CD4-positive, alpha-beta memory T cell (primary cell): ENCODE measurements at regions of chr21 and their contacts with region 1.

Region 1: DNA sequence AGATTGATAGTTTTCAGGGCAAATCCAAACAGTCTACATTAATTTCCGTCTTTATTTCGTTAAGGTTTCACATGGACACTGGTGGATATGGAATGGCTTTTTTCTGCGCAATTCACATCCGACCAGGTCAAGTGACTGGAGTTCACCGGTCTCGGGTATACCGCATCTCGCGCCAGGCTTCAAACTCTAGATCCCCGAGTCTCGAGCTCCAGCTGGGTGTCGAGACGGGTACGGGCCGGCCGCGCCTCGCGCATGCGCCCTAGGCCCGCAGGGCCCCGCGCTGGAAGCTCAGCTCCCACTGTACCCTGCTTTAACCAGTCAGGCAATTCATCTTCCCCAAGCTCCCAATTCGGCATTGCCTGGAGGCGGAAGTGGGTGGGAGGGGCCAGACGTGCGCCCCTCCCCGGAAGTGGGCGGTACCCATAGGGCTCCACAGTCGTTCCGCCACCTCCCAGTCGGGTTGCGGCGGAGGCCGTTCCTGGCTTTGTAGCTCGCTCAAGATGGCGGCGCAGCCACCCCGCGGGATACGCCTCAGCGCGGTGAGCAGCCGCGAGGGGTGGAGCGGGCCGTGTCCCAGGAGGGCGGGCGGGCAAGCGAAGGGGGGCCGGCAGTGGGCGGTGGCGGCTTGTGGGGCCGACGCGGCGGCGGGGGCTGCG is at the start of gene MORC3:
- DNase-seq: peak; percentile 96 to 98 (median 97)
- H3K4me3 ChIP-seq: peak within 1 kb of the TSS; percentile 75 to 98
- H3K4me3 Mint-ChIP-seq: peak within 1 kb of the TSS; percentile 94 to 98 (median 96)
- H3K27ac ChIP-seq: peak within 1 kb of the TSS; percentile 90
- H3K27ac Mint-ChIP-seq: peak within 1 kb of the TSS; percentile 89 to 99 (median 97)
- H3K4me1 ChIP-seq: peaks cover 28% of the 10 kb centered on the region
- H3K4me1 Mint-ChIP-seq: peaks cover 18 to 46% (median 34%) of the 10 kb centered on the region in 4 donors
- H3K27me3 ChIP-seq: no peaks in the 10 kb centered on the region
- H3K27me3 Mint-ChIP-seq: no peaks in the 10 kb centered on the region
- total RNA-seq, gene MORC3: 105 to 108 TPM

Region 2: GRCh38 chr21:36097266-36098230 is 222.3 kb before region 1 on chr21:
- CTCF ChIA-PET with region 1: no interaction called
- POLR2A ChIA-PET with region 1: no interaction called
- intact Hi-C with region 1: no loop called
- DNase-seq: no peak
- H3K4me3 ChIP-seq: no peak overlapping the region
- H3K4me3 Mint-ChIP-seq: no peak overlapping the region
- H3K27ac ChIP-seq: no peak overlapping the region
- H3K27ac Mint-ChIP-seq: no peak overlapping the region
- H3K4me1 ChIP-seq: no peaks in the 10 kb centered on the region
- H3K4me1 Mint-ChIP-seq: no peaks in the 10 kb centered on the region
- H3K27me3 ChIP-seq: no peaks in the 10 kb centered on the region
- H3K27me3 Mint-ChIP-seq: peaks cover 2 to 4% of the 10 kb centered on the region in 2 donors

Region 3: GRCh38 chr21:36135391-36136102 is 184.3 kb before region 1 on chr21:
- CTCF ChIA-PET with region 1: interaction called, 5 read pairs
- POLR2A ChIA-PET with region 1: interaction called, 14 read pairs
- intact Hi-C with region 1: no loop called
- DNase-seq: peak in 4 of 5 donors; percentile 49 to 61 (median 53)
- H3K4me3 ChIP-seq: peak overlapping the region; percentile 58 to 86
- H3K4me3 Mint-ChIP-seq: peak overlapping the region; percentile 89 to 96 (median 95)
- H3K27ac ChIP-seq: peak overlapping the region; percentile 51
- H3K27ac Mint-ChIP-seq: peak overlapping the region; percentile 86 to 95 (median 92)
- H3K4me1 ChIP-seq: peaks cover 25% of the 10 kb centered on the region
- H3K4me1 Mint-ChIP-seq: peaks cover 12 to 35% (median 21%) of the 10 kb centered on the region in 4 donors
- H3K27me3 ChIP-seq: no peaks in the 10 kb centered on the region
- H3K27me3 Mint-ChIP-seq: no peaks in the 10 kb centered on the region

Region 4: GRCh38 chr21:36149788-36150711 is 169.8 kb before region 1 on chr21:
- CTCF ChIA-PET with region 1: interaction called, 38 read pairs
- POLR2A ChIA-PET with region 1: interaction called, 28 read pairs
- intact Hi-C with region 1: no loop called
- DNase-seq: no peak
- H3K4me3 ChIP-seq: no peak overlapping the region
- H3K4me3 Mint-ChIP-seq: peak overlapping the region in 7 of 8 donors; percentile 54 to 77 (median 65)
- H3K27ac ChIP-seq: no peak overlapping the region
- H3K27ac Mint-ChIP-seq: peak overlapping the region; percentile 76 to 95 (median 91)
- H3K4me1 ChIP-seq: peaks cover 44% of the 10 kb centered on the region
- H3K4me1 Mint-ChIP-seq: peaks cover 29 to 63% (median 46%) of the 10 kb centered on the region in 4 donors
- H3K27me3 ChIP-seq: no peaks in the 10 kb centered on the region
- H3K27me3 Mint-ChIP-seq: no peaks in the 10 kb centered on the region

Region 5: GRCh38 chr21:36209626-36210171 is 110.2 kb before region 1 on chr21:
- CTCF ChIA-PET with region 1: no interaction called
- POLR2A ChIA-PET with region 1: interaction called, 10 read pairs
- intact Hi-C with region 1: no loop called
- DNase-seq: peak; percentile 46 to 53 (median 49)
- H3K4me3 ChIP-seq: no peak overlapping the region
- H3K4me3 Mint-ChIP-seq: no peak overlapping the region
- H3K27ac ChIP-seq: no peak overlapping the region
- H3K27ac Mint-ChIP-seq: peak overlapping the region in 3 of 7 donors; percentile 2 to 22 (median 10)
- H3K4me1 ChIP-seq: no peaks in the 10 kb centered on the region
- H3K4me1 Mint-ChIP-seq: peaks cover 3 to 8% (median 5%) of the 10 kb centered on the region in 4 donors
- H3K27me3 ChIP-seq: no peaks in the 10 kb centered on the region
- H3K27me3 Mint-ChIP-seq: no peaks in the 10 kb centered on the region

Region 6: GRCh38 chr21:36260030-36260787 is 59.7 kb before region 1 on chr21:
- CTCF ChIA-PET with region 1: interaction called, 29 read pairs
- POLR2A ChIA-PET with region 1: interaction called, 21 read pairs
- intact Hi-C with region 1: loop called (anchors 1 kb)
- DNase-seq: peak; percentile 58 to 72 (median 67)
- H3K4me3 ChIP-seq: peak overlapping the region; percentile 30 to 61
- H3K4me3 Mint-ChIP-seq: peak overlapping the region; percentile 76 to 87 (median 86)
- H3K27ac ChIP-seq: peak overlapping the region; percentile 44
- H3K27ac Mint-ChIP-seq: peak overlapping the region; percentile 57 to 95 (median 90)
- H3K4me1 ChIP-seq: peaks cover 12% of the 10 kb centered on the region
- H3K4me1 Mint-ChIP-seq: peaks cover 10 to 17% (median 15%) of the 10 kb centered on the region in 4 donors
- H3K27me3 ChIP-seq: no peaks in the 10 kb centered on the region
- H3K27me3 Mint-ChIP-seq: no peaks in the 10 kb centered on the region

Region 7: DNA sequence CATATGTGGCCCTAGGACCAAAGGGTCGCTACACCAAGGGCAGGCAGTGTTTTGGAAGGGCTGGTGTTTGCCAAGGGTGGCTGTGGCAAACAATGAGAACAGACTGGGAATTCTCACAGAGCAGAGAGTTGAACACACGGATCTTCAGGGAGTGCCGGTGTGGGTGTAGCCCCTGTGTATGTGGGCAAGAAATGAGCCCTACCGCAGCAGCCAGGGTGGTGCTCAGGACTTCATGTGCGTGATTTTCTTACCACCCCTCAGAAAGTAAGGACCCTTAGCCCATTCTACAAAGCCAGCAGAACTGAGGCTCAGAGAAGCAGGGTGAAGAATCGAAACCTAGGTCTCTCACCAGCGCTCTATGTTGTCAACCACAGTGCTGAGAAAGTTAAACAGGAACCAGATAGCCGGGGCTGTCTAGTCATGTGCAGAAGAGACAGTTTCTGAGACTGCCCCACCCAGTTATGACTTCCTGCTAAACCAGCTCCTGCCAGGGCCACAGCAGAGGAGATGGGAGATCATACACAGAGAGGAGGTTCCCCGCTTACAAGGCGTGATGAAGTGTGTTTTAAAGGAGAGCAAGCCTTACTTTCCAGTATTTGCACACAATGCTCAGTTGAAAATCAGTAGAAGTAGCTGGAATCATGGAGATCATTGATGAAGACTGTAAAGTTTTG is 21.8 kb before region 1 on chr21:
- CTCF ChIA-PET with region 1: interaction called, 20 read pairs
- POLR2A ChIA-PET with region 1: interaction called, 279 read pairs
- intact Hi-C with region 1: loop called (anchors 1 kb)
- DNase-seq: peak; percentile 81 to 91 (median 84)
- H3K4me3 ChIP-seq: peak overlapping the region; percentile 17 to 52
- H3K4me3 Mint-ChIP-seq: peak overlapping the region; percentile 77 to 89 (median 84)
- H3K27ac ChIP-seq: peak overlapping the region; percentile 79
- H3K27ac Mint-ChIP-seq: peak overlapping the region; percentile 89 to 99 (median 96)
- H3K4me1 ChIP-seq: peaks cover 37% of the 10 kb centered on the region
- H3K4me1 Mint-ChIP-seq: peaks cover 26 to 40% (median 34%) of the 10 kb centered on the region in 4 donors
- H3K27me3 ChIP-seq: no peaks in the 10 kb centered on the region
- H3K27me3 Mint-ChIP-seq: no peaks in the 10 kb centered on the region

Region 8: GRCh38 chr21:36945496-36946138 is 625.7 kb after region 1 on chr21:
- CTCF ChIA-PET with region 1: no interaction called
- POLR2A ChIA-PET with region 1: no interaction called
- intact Hi-C with region 1: no loop called
- DNase-seq: no peak
- H3K4me3 ChIP-seq: no peak overlapping the region
- H3K4me3 Mint-ChIP-seq: no peak overlapping the region
- H3K27ac ChIP-seq: no peak overlapping the region
- H3K27ac Mint-ChIP-seq: no peak overlapping the region
- H3K4me1 ChIP-seq: no peaks in the 10 kb centered on the region
- H3K4me1 Mint-ChIP-seq: peaks cover 0 to 1% (median under 1%) of the 10 kb centered on the region in 4 donors
- H3K27me3 ChIP-seq: no peaks in the 10 kb centered on the region
- H3K27me3 Mint-ChIP-seq: no peaks in the 10 kb centered on the region